AG04450 (cell line): ENCODE measurements at regions of chr16 and their contacts with region 1.

Region 1: GRCh38 chr16:46801428-46802049 is 29.4 kb downstream of the C16orf87 start:
- DNase-seq: no peak
- H3K4me3 ChIP-seq: no peak overlapping the region
- H3K27ac ChIP-seq: no peak overlapping the region
- H3K27me3 ChIP-seq: no peaks in the 10 kb centered on the region
- CTCF ChIP-seq: peak; percentile 56

Region 2: DNA sequence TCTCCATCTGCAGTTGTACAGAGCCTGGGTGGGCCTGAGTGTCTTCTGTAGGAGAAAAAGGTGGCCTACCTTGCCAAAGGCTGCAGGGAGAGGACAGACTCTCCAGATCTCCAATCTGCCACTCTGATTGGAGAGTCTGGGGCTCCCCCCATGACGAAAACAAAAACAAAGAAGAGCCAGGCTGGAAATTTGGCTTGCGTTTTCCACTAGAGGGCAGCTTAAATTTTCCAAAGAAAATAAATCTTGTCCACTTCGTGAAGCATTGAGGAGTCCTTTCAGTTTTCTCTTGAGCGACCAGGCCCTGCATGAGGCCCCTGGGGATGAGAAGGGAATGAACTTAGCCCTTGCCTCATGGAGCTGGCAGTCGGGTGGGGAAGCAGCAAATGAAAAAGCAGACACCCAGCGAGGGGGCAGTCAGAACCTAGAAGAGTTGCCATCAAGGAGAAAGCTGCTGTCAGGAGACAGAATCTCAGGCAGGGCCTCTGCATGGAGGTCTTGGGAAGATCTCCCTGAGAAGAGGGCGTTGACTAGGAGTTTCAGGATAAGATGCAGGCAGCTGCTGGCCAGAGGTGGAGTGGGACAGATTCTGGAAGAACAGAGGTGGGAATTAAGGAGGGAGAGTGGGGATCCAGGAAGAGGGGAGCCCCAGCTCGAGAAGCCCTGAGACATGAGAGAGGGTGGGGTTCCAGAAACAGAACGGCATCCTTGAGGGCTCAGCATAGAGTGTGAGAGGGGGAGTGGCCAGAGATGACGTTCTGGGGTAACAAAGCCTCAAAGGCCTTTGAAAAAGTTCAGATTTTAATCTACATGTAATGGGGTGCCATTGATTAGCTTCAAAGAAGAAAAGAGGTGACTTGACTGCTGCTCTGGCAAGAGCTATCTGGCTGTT is 172.0 kb before region 1 on chr16:
- CTCF ChIA-PET with region 1: interaction called, 20 read pairs
- POLR2A ChIA-PET with region 1: no interaction called
- DNase-seq: no peak
- H3K4me3 ChIP-seq: peak overlapping the region; percentile 18; the same call in 1 of the 2 replicates
- H3K27ac ChIP-seq: peak overlapping the region; percentile 43
- H3K27me3 ChIP-seq: peaks cover 3% of the 10 kb centered on the region
- CTCF ChIP-seq: peak; percentile 63

Region 3: DNA sequence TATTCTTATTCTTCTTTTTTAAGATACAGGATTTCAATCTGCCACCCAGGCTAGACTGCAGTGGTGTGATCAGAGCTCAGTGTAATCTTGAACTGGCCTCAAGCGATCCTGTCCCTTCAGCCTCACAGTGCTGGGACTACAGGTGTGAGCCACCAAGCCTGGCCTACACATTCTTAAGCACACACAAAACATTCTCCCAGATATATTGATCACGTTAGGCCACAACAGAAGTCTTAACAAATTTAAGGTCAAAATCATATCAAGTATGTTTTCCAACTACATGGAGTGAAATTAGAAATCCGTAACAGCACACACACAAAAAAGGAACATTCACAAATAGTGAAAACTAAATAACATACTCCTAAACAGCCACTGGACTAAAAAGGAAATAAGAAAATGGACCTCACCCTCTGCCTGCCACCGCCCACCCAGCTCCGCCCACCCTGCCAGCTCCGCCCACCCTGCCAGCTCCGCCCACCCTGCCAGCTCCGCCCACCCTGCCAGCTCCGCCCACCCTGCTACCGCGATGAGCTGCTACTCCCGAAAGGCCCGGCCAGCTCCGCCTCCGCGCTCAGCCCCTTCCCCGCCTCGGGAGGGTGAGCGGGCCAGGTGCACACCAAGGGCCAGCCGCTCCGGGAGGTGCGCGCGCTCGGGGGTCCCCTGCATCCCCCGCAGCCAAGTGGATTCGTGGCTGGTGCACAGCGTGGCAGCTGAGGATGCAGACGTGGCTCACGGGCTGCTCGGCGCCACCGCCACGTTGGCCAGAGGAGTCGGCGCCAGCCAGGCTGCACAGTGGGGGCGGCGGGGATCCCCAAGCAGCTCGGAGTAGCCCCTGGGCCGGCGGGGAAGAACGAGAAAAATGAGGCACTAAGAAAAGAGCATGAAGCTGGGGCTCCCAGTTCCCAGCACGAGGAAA is 11.8 kb before region 1 on chr16:
- CTCF ChIA-PET with region 1: interaction called, 19 read pairs
- POLR2A ChIA-PET with region 1: interaction called, 3 read pairs
- DNase-seq: no peak
- H3K4me3 ChIP-seq: peak overlapping the region; percentile 60
- H3K27ac ChIP-seq: peak overlapping the region; percentile 42
- H3K27me3 ChIP-seq: no peaks in the 10 kb centered on the region
- CTCF ChIP-seq: no peak

Region 4: GRCh38 chr16:46812781-46813540 is 11.4 kb after region 1 on chr16:
- CTCF ChIA-PET with region 1: interaction called, 22 read pairs
- POLR2A ChIA-PET with region 1: interaction called, 8 read pairs
- DNase-seq: no peak
- H3K4me3 ChIP-seq: no peak overlapping the region
- H3K27ac ChIP-seq: no peak overlapping the region
- H3K27me3 ChIP-seq: no peaks in the 10 kb centered on the region
- CTCF ChIP-seq: no peak

Region 5: DNA sequence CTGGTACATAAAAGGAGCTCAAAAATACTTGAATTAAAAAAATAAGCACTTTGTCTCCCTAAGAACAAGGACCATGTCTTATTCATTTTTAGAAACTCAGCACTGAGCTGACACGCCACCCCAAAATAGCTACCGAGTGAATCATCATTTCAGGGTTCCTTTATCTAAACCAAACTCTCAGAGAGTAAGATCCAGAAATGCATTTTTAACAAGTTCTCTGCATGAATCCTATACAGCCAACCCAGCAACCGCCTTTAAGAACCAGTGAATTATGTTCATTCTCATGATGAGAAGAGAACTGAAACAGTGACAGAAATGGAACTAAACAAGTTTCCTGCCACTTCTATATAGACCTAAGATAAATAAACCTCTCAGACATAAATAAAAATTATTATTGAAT is 20.7 kb after region 1 on chr16:
- CTCF ChIA-PET with region 1: interaction called, 16 read pairs
- POLR2A ChIA-PET with region 1: no interaction called
- DNase-seq: peak; percentile 36
- H3K4me3 ChIP-seq: no peak overlapping the region
- H3K27ac ChIP-seq: no peak overlapping the region
- H3K27me3 ChIP-seq: no peaks in the 10 kb centered on the region
- CTCF ChIP-seq: no peak

Region 6: GRCh38 chr16:46830902-46831647 is 29.5 kb after region 1 on chr16 and contains the start of gene C16orf87:
- CTCF ChIA-PET with region 1: interaction called, 11 read pairs
- POLR2A ChIA-PET with region 1: no interaction called
- DNase-seq: peak; percentile 84
- H3K4me3 ChIP-seq: peak within 1 kb of the TSS; percentile 79
- H3K27ac ChIP-seq: peak within 1 kb of the TSS; percentile 40
- H3K27me3 ChIP-seq: no peaks in the 10 kb centered on the region
- CTCF ChIP-seq: no peak
- polyA plus RNA-seq, gene C16orf87: 16.8 and 21.7 TPM in 2 replicates